ENCODE measurements at regions of chr12 and their contacts with region 1.

Region 1: GRCh38 chr12:67025543-67026114 is 243.5 kb upstream of the CAND1 start:
- DNase-seq: no peak

Region 2: DNA sequence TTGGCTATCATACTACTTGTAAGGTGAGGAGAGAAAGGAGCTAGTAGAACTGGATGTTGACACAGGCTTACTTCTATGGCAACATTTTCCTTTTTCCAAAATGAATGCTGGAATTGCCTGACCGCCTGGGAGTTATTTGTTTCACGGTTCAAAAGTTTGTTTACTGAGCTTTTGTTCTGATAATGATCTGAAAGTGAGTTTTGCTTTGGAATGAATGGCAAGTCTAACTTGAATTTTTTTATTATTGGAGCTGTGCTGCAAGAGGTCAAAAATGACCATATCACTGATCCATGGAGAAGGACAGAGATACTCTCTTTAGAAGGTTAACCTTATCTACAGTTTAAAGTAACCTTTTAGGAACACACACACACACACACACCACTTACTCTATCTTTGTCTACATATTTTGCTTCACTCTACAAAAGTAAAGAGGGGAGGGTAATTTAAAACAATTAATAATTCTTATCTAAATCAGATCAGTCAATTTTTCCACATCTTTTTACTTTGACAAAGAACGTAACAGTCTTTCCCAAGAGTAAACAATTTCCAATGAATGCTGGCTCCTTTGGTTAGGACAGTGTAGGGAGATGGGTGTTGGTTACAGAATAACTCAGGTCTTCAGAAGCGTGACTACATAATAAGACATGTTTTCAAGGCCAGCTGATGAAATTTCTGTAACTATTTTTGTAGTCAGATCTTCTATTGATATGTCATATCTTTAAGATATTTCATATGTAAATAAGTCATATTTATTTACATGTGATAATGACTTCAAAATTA is 60.3 kb after region 1 on chr12:
- intact Hi-C with region 1: no loop called
- DNase-seq: no peak

Region 3: GRCh38 chr12:67211494-67211893 is 185.9 kb after region 1 on chr12:
- intact Hi-C with region 1: loop called (anchors 10 kb)
- DNase-seq: no peak